CD14-positive monocyte (primary cell): ENCODE measurements at regions of chr10 and their contacts with region 1.

Region 1: DNA sequence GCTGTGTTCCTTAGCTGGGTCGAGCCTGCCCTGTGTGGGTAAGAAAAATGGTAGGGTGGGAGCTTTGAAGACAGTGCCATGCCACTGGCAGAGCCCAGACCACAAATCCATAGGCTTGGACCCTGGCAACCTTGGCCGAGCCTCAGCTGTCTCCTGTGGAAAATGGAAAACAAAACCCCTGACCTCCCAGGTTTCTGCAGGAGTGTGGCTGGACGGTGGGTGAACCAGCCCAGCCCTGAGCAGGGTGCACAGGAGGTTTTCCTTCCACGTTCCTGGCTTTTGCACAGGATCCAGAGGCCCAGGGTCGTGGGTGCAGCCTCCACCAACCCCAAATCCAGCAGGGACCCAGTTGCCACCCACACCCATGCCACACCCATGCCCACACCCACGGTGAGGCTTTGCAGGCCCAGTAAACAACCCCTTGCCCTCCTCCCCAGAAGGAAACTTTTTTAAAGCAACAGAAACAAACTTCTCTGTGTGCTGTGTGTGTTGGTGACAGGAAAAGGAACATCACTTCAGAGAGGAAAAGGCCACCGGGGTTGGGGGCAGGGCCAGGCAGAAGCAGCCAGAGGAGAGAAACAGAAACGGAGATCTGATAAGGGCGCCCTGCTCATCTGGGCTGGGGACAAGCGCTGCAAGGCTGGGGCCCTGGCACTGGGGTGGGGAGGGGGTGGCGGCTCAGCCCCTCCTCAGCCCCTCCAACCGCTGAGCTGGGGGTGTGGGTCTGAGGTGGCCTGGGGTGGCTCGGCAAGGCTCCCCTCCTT is 20.7 kb upstream of the ZMIZ1 start:
- DNase-seq: peak; percentile 45 to 46 (median 45)
- H3K4me3 ChIP-seq: peak overlapping the region; percentile 10 to 73 (median 24)
- H3K4me3 Mint-ChIP-seq: peak overlapping the region; percentile 70 to 77
- H3K27ac ChIP-seq: peak overlapping the region; percentile 83 to 88
- H3K27ac Mint-ChIP-seq: peak overlapping the region; percentile 75 to 95 (median 83)
- H3K4me1 ChIP-seq: peaks cover 32% of the 10 kb centered on the region in 2 donors
- H3K4me1 Mint-ChIP-seq: peaks cover 37% of the 10 kb centered on the region
- H3K27me3 ChIP-seq: no peaks in the 10 kb centered on the region
- H3K27me3 Mint-ChIP-seq: peaks cover 0 to 16% (median 6%) of the 10 kb centered on the region in 3 donors
- CTCF ChIP-seq: no peak

Region 2: GRCh38 chr10:79007421-79008319 is 40.4 kb before region 1 on chr10:
- intact Hi-C with region 1: loop called in 1 of 2 experiments (anchors 5 kb)
- DNase-seq: peak; percentile 28 to 58 (median 53)
- H3K4me3 ChIP-seq: no peak overlapping the region
- H3K4me3 Mint-ChIP-seq: no peak overlapping the region
- H3K27ac ChIP-seq: no peak overlapping the region
- H3K27ac Mint-ChIP-seq: peak overlapping the region in 3 of 7 donors; percentile 8 to 81 (median 12)
- H3K4me1 ChIP-seq: no peaks in the 10 kb centered on the region
- H3K4me1 Mint-ChIP-seq: peaks cover 9% of the 10 kb centered on the region
- H3K27me3 ChIP-seq: no peaks in the 10 kb centered on the region
- H3K27me3 Mint-ChIP-seq: peaks cover 2 to 8% (median 6%) of the 10 kb centered on the region in 3 donors
- CTCF ChIP-seq: no peak